ENCODE measurements at regions of chr22 and their contacts with region 1.

Region 1: DNA sequence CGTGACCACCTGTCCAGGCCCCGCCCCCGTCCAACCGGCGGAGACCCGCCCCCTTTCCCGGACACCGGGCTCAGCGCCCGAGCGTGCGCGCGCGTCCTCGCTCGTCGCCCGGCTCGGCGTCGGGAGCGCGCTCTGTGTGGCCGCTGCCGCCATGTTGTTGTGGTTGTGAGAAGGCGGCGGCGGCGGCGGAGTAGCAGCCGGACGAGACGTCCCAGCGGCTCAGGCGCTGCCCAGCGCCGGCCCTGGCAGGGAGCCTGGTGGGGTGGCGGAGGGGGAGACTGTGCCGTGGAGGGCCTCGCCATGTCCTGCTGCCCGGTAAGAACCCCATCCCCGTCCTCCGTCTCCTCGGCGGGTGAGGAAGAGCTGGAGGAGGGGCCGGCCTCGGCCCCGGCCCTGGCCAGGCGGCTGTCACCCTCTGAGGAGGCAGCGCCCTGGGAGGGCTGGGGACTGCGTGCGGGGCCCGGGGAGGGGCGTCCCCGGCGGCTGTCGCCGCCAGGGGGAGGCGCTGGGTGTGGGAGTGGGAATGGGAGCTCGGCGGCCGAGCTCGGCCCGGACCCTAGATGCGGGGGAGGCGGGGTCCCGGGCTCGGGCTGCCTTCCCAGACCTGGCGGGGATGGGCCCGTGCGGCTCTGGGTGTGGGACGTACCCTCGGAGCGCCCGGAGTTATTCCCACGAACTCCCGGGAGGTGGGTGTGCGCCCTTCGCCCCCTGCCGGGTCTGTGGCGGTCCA is at the start of gene MTMR3:
- DNase-seq: peak; percentile 93 to 97
- H3K4me3 ChIP-seq: peak within 1 kb of the TSS; percentile 81
- H3K4me3 Mint-ChIP-seq: peak within 1 kb of the TSS; percentile 74
- H3K27ac Mint-ChIP-seq: no peak within 1 kb of the TSS
- H3K4me1 ChIP-seq: 0 out of 2 replicates have a peak, but pooled peaks cover 3% of the 10 kb centered on the region
- H3K4me1 Mint-ChIP-seq: no peaks in the 10 kb centered on the region
- H3K27me3 ChIP-seq: no peaks in the 10 kb centered on the region
- H3K27me3 Mint-ChIP-seq: no peaks in the 10 kb centered on the region
- CTCF ChIP-seq: peak; percentile 47 to 57
- total RNA-seq, gene MTMR3: 27.3 and 30.2 TPM in 2 replicates

Region 2: DNA sequence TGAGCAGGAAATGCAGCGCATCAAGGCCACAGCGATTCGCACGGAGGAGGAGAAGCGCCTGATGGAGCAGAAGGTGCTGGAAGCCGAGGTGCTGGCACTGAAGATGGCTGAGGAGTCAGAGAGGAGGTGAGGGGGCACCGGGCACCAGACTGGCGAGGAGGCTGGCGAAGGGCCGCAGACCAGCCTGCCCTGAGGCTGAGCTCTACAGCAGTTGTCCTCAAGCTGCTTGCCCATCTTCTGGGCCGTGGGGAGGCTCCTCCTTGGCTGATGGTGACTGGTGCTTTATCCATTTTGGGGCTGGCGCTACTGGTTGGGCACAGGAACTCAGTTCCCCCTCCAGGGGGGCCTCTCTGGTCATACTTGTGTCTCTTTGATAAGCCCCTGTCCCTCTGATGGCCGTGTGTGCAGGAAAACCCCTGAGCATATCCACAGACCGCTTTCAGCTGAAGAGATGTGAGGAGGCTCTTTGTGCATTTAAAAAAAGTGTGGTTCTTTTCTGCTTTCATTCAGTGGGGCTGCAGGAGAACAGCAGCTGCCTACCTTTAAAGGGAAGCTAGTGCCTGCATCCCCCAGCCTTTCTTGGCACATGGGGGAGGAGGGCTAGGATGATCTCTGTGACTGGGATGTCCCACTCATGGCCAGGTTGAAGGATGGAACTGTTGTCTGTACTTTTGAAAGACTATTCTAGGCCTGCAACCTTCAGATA is 209.7 kb before region 1 on chr22:
- CTCF ChIA-PET with region 1: interaction called, 10 read pairs
- POLR2A ChIA-PET with region 1: no interaction called
- intact Hi-C with region 1: no loop called
- DNase-seq: no peak
- H3K4me3 ChIP-seq: no peak overlapping the region
- H3K4me3 Mint-ChIP-seq: no peak overlapping the region
- H3K27ac Mint-ChIP-seq: no peak overlapping the region
- H3K4me1 ChIP-seq: no peaks in the 10 kb centered on the region
- H3K4me1 Mint-ChIP-seq: no peaks in the 10 kb centered on the region
- H3K27me3 ChIP-seq: no peaks in the 10 kb centered on the region
- H3K27me3 Mint-ChIP-seq: no peaks in the 10 kb centered on the region
- CTCF ChIP-seq: no peak

Region 3: GRCh38 chr22:29824677-29825076 is 58.5 kb before region 1 on chr22:
- CTCF ChIA-PET with region 1: no interaction called
- POLR2A ChIA-PET with region 1: no interaction called
- intact Hi-C with region 1: no loop called
- DNase-seq: no peak
- H3K4me3 ChIP-seq: no peak overlapping the region
- H3K4me3 Mint-ChIP-seq: no peak overlapping the region
- H3K27ac Mint-ChIP-seq: no peak overlapping the region
- H3K4me1 ChIP-seq: no peaks in the 10 kb centered on the region
- H3K4me1 Mint-ChIP-seq: no peaks in the 10 kb centered on the region
- H3K27me3 ChIP-seq: no peaks in the 10 kb centered on the region
- H3K27me3 Mint-ChIP-seq: no peaks in the 10 kb centered on the region
- CTCF ChIP-seq: no peak

Region 4: GRCh38 chr22:29855611-29856181 is 27.5 kb before region 1 on chr22:
- CTCF ChIA-PET with region 1: no interaction called
- POLR2A ChIA-PET with region 1: interaction called, 12 read pairs
- intact Hi-C with region 1: no loop called
- DNase-seq: no peak
- H3K4me3 ChIP-seq: no peak overlapping the region
- H3K4me3 Mint-ChIP-seq: no peak overlapping the region
- H3K27ac Mint-ChIP-seq: no peak overlapping the region
- H3K4me1 ChIP-seq: no peaks in the 10 kb centered on the region
- H3K4me1 Mint-ChIP-seq: no peaks in the 10 kb centered on the region
- H3K27me3 ChIP-seq: no peaks in the 10 kb centered on the region
- H3K27me3 Mint-ChIP-seq: no peaks in the 10 kb centered on the region
- CTCF ChIP-seq: no peak

Region 5: DNA sequence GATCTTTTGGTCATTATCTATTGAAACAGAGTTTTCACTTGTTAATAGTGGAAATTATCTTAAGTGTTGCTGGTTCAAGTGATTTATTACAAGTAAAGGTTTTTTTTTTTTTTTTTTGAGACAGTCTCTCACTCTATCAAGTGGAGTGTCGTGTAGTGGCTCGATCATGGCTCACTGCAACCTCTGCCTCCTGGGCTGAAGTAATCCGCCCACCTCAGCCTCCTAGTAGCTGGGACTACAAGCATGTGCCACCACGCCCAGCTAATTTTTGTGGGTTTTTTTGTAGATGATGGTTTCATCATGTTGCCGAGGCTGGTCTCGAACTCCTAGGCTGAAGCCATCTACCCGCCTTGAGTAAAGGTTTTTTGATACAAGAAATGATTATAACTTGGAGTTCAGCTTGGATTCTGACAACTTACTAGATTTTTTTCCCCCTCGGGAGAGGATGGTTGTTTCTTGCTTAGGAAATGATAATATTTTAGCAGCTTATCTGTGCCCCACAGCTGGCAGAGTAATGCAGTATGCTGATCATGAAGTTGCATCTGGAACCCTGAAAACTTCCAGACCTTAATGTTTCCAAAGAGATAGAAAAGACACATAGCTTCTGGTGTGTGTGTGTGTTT is 68.7 kb after region 1 on chr22:
- CTCF ChIA-PET with region 1: no interaction called
- POLR2A ChIA-PET with region 1: interaction called, 13 read pairs
- intact Hi-C with region 1: no loop called
- DNase-seq: no peak
- H3K4me3 ChIP-seq: no peak overlapping the region
- H3K4me3 Mint-ChIP-seq: no peak overlapping the region
- H3K27ac Mint-ChIP-seq: no peak overlapping the region
- H3K4me1 ChIP-seq: no peaks in the 10 kb centered on the region
- H3K4me1 Mint-ChIP-seq: no peaks in the 10 kb centered on the region
- H3K27me3 ChIP-seq: no peaks in the 10 kb centered on the region
- H3K27me3 Mint-ChIP-seq: no peaks in the 10 kb centered on the region
- CTCF ChIP-seq: no peak

Region 6: DNA sequence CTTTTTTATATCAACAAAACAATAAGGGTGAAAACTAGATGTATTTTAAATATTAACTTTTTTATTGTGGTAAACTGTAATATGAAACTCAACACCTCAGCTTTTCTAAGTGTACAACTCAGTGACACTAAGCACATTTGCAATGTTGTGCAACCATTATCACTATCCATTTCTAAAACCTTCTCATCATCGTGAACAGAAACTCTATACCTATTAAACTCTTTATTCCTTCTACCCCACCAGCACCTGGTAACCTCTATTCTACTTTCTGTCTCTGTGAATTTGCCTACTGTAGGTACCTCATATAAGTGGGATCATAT is 206.4 kb after region 1 on chr22:
- CTCF ChIA-PET with region 1: interaction called, 14 read pairs
- POLR2A ChIA-PET with region 1: no interaction called
- intact Hi-C with region 1: loop called (anchors 5 kb)
- DNase-seq: no peak
- H3K4me3 ChIP-seq: no peak overlapping the region
- H3K4me3 Mint-ChIP-seq: peak overlapping the region; percentile 3
- H3K27ac Mint-ChIP-seq: no peak overlapping the region
- H3K4me1 ChIP-seq: no peaks in the 10 kb centered on the region
- H3K4me1 Mint-ChIP-seq: no peaks in the 10 kb centered on the region
- H3K27me3 ChIP-seq: no peaks in the 10 kb centered on the region
- H3K27me3 Mint-ChIP-seq: no peaks in the 10 kb centered on the region
- CTCF ChIP-seq: no peak

Region 7: GRCh38 chr22:30265823-30266444 is 382.7 kb after region 1 on chr22:
- CTCF ChIA-PET with region 1: no interaction called
- POLR2A ChIA-PET with region 1: no interaction called
- intact Hi-C with region 1: no loop called
- DNase-seq: no peak
- H3K4me3 ChIP-seq: no peak overlapping the region
- H3K4me3 Mint-ChIP-seq: no peak overlapping the region
- H3K27ac Mint-ChIP-seq: no peak overlapping the region
- H3K4me1 ChIP-seq: peaks cover 5% of the 10 kb centered on the region; the same call in 1 of the 2 replicates
- H3K4me1 Mint-ChIP-seq: no peaks in the 10 kb centered on the region
- H3K27me3 ChIP-seq: no peaks in the 10 kb centered on the region
- H3K27me3 Mint-ChIP-seq: no peaks in the 10 kb centered on the region
- CTCF ChIP-seq: no peak

Measured in Caco-2 (cell line).